ENCODE measurements at regions of chr20 and their contacts with region 1.

Region 1: GRCh38 chr20:35269055-35269781 is 8.7 kb downstream of the MMP24OS start:
- DNase-seq: peak; percentile 93
- H3K4me3 ChIP-seq: no peak overlapping the region; a peak in 1 of 4 replicates
- H3K27ac ChIP-seq: peak overlapping the region in 1 of 2 experiments; percentile 14; a peak in 1 of 4 replicates
- H3K4me1 ChIP-seq: peaks cover 0 to 12% of the 10 kb centered on the region in 2 experiments; a peak in 2 of 4 replicates
- H3K27me3 ChIP-seq: no peaks in the 10 kb centered on the region
- CTCF ChIP-seq: peak; percentile 87
- EP300 ChIP-seq: no peak
- RAD21 ChIP-seq: peak; percentile 83

Region 2: GRCh38 chr20:35146920-35147574 is 122.2 kb before region 1 on chr20 and contains the start of gene EDEM2:
- CTCF ChIA-PET with region 1: interaction called, 28 read pairs
- POLR2A ChIA-PET with region 1: no interaction called
- DNase-seq: peak; percentile 95
- H3K4me3 ChIP-seq: peak within 1 kb of the TSS; percentile 89 to 94
- H3K27ac ChIP-seq: peak within 1 kb of the TSS; percentile 64 to 80
- H3K4me1 ChIP-seq: peaks cover 0 to 7% of the 10 kb centered on the region in 2 experiments; a peak in 2 of 4 replicates
- H3K27me3 ChIP-seq: no peaks in the 10 kb centered on the region
- CTCF ChIP-seq: no peak
- EP300 ChIP-seq: peak in 1 of 2 experiments; percentile 43; a peak in 1 of 4 replicates
- RAD21 ChIP-seq: no peak
- polyA plus RNA-seq, gene EDEM2: 30.4 and 34.3 TPM in 2 replicates

Region 3: DNA sequence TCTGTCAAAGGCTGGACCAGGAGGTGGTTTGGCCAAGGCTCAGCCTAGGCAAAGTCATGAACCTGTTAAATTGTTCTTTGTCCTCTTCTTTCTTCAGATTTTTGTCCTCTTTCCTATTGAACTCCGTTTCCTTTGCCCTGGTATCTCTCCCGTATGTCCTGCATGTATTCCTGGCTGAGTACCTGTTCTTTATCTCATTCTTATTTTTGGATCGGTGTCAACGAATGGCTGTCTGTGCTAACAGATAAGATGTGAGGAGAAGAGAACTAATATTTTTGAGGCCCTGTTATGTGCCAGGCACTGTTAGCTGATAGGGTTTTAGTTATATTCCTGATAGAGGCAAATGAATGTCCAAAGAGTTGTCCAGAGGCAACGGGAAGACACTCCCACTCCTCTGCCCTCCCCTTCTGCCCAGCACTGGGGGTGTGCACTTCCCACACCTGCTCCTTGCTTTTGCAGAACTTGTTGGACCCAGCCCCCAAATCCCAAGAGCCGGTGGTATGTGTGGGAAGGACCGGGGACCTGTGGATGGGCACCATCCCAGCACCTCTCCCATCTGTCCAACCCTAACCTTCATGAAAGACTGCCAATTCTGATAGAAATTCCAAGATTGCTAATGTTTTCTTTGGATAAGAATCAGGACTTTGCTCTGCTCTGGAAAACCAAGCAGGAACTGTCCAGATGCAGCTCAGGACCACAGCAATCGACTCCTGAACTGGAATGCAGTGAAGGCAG is 11.9 kb before region 1 on chr20:
- CTCF ChIA-PET with region 1: interaction called, 19 read pairs
- POLR2A ChIA-PET with region 1: no interaction called
- DNase-seq: no peak
- H3K4me3 ChIP-seq: no peak overlapping the region
- H3K27ac ChIP-seq: peak overlapping the region in 1 of 2 experiments; percentile 29; a peak in 1 of 4 replicates
- H3K4me1 ChIP-seq: peaks cover 4 to 10% of the 10 kb centered on the region in 2 experiments; a peak in 2 of 4 replicates
- H3K27me3 ChIP-seq: no peaks in the 10 kb centered on the region
- CTCF ChIP-seq: no peak
- EP300 ChIP-seq: peak in 1 of 2 experiments; percentile 61; a peak in 1 of 4 replicates
- RAD21 ChIP-seq: no peak

Region 4: GRCh38 chr20:35329435-35330139 is 60.4 kb after region 1 on chr20:
- CTCF ChIA-PET with region 1: no interaction called
- POLR2A ChIA-PET with region 1: no interaction called
- DNase-seq: peak; percentile 34
- H3K4me3 ChIP-seq: no peak overlapping the region; a peak in 1 of 4 replicates
- H3K27ac ChIP-seq: no peak overlapping the region
- H3K4me1 ChIP-seq: peaks cover 16 to 17% of the 10 kb centered on the region in 2 experiments; a peak in 3 of 4 replicates
- H3K27me3 ChIP-seq: no peaks in the 10 kb centered on the region
- CTCF ChIP-seq: peak; percentile 58
- EP300 ChIP-seq: no peak
- RAD21 ChIP-seq: peak; percentile 25